Lower leg skin (tissue), 4 donors: ENCODE measurements at regions of chr15 and their contacts with region 1.

Region 1: DNA sequence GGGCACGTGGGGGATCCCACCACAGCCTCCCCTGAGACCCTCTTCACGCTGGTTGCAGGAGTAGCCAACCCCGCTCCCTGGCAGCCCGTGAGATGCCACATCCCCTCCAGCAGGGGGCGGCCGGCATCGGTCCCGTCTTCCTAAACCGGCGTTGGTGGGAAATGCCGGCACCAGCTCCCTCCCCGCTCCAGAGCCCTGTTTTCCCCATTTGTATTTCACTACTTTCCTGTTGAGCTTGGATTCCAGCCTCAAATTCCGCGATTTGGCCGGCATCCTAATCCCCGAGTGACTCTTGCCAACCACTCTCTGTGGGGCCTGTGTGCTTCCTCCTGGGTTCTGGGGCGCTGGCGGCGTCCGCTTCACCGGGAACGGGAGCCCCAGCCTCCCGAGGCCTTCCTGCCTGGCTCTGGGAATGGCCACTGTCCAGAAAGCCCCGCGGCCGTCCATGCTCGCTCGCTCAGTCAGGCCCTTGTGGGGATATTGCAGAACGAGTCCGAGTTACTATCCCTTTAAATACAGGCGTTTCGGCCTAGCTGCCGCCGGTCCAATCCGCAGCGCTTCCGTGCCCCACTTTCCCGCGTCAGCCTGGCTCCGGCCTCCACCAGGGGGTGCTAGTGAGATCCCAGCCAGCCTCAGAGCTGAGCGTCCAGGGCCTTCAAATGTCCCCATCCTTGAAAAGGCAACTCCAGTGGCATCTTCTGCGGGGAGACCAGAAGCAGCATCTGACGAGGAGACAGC is 8.1 kb upstream of the ADAMTS17 start:
- DNase-seq: peak; percentile 91 to 99
- H3K4me3 ChIP-seq: peak overlapping the region; percentile 77
- CTCF ChIP-seq: peak in 1 of 3 donors; percentile 79
- POLR2A ChIP-seq: no peak

Region 2: DNA sequence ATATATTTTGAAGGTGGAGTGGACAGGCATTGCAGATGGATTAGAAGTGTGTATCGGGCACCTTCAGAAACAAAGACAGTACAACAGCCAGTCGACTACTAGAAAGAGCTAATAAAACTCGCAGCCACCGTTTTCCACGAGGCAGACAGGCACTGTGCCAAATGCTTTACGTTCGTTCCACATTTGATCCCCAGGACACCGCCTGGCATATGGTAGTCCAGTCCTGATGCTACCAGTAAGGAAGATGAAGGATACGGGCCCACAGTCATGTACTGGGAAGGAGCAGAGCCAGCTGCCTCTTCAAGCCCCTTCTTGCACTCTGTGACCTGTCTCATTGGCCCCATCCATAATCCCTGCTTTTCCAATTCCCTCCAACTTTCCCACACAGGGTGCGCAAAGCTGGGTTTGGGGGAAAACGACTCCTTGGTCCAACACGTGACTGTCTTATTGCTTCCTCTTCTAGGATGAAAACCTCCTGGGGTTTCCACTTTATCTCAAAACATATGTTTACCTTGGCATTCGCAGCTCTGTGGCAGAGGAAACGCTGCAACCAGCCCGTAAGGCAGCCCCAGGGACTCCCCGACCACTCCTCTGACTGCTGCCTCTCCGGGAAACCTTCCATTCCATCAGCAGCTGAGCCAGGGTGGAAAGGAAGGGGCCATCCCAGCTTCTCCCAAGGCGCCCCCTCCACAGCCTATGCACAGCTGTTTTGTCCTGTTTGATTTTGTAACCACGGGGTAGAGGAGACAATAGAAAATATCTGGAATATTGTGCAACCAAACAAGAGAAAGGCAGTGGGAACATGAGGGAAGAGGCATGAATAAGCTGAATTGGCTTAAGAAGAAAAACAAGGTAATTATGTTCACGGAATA is 115.5 kb before region 1 on chr15:
- intact Hi-C with region 1: no loop called
- DNase-seq: no peak
- H3K4me3 ChIP-seq: no peak overlapping the region
- CTCF ChIP-seq: no peak
- POLR2A ChIP-seq: no peak

Region 3: DNA sequence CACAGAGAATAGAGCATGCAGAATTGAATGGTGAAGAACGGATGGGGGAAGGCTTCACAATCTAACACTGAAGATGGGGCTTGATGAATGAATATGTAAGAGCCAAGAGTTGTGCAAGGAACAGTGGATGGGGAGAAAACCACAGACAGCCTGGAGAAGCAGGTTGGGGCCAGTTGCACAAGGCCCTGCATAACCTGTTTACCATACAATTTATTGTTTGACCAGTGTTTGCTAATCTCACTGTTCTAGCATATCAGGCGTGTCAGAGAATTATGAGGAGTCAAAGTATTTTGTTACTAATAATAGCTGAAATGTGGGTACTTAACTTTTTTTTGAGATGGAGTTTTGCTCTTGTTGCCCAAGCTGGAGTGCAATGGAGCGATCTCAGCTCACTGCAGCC is 215.7 kb after region 1 on chr15:
- intact Hi-C with region 1: loop called (anchors 5 kb)
- DNase-seq: no peak
- H3K4me3 ChIP-seq: no peak overlapping the region
- CTCF ChIP-seq: no peak
- POLR2A ChIP-seq: no peak